OCI-LY7 (cell line): ENCODE measurements at regions of chr10 and their contacts with region 1.

Region 1: DNA sequence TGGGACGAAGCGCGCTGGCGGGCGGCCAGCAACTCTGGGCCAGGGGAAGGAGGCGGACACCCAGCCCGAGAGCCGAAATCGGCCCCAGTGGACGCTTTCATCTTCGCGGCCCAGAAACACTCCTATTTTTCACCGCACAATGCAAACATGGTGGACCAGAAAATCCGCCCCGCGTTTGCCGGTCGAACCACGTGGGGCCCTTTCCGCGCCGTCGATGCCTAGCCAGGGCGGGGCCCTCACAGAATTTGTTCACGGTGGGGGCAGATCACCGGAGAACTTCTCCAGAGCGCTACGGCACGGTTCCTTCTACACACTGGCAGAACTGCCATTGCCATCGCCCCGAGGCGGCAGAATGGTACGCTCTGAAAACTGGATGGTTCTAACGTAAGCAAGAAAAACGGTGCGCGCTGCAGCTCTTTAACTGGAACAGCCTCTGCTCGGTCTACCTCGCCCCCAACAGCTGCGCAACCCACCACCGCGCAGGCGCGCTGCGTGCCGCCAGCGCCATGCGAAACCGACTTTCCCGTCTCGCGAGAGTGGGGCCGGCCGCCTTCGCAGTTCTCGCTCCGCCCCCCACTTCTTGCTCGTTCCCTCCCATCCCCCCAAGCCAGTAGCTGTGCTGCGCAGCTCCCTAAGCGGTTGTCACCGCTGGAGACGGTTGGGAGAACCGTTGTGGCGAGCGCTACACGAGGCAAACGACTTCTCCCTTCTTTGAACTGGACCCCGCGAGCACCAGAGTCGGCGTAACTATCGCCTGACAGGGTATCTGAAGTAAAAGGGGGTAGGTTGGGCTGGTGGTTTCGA is at the start of gene HNRNPH3:
- DNase-seq: peak; percentile 99
- H3K4me3 ChIP-seq: peak within 1 kb of the TSS; percentile 85
- H3K27ac ChIP-seq: peak within 1 kb of the TSS; percentile 89
- H3K4me1 ChIP-seq: peaks cover 65% of the 10 kb centered on the region
- CTCF ChIP-seq: no peak
- total RNA-seq, gene HNRNPH3: 30.8 and 69.2 TPM in 2 replicates

Region 2: DNA sequence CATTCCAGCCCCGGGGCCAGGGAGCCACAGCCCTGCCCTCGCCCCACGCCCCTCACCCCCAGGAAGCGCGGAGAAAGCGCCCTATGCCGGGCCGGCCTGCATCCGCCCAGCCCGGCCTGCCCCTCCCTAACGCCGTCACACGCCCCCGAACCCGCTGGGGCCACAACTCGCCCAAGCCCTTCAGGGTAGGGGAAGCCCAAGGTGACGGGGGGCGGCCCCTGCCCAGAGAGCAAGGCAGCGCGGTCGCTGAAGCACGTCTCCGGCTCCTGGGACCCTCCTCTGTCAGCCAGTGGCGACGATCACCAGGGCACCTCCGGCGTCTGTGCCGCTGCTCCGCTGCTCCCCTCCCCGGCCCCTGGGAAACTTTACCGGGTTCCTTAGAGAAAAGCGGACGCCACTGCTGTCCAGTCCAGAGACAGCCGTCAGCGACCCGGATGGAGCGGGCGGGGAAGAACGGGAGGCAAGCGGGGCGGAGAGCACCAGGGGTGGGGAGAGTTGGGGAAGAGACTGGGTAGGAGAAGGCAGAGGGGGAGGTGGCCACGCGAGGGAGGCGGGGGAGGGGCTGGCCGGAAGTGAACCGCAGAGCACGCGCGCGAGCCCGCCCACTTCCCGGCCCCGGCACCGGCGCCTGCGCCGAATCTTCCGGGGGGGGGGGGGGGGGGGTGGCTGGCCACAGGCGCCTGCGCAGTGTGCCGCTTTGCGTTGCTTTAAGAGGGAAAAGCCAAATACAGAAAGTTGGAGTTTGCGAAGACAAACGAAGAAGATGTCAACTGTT is 256.7 kb before region 1 on chr10 and contains the start of gene HERC4:
- CTCF ChIA-PET with region 1: no interaction called
- POLR2A ChIA-PET with region 1: interaction called, 3 read pairs
- intact Hi-C with region 1: loop called (anchors 2 kb)
- DNase-seq: peak; percentile 91
- H3K4me3 ChIP-seq: peak within 1 kb of the TSS; percentile 85
- H3K27ac ChIP-seq: peak within 1 kb of the TSS; percentile 83
- H3K4me1 ChIP-seq: peaks cover 15% of the 10 kb centered on the region
- CTCF ChIP-seq: no peak
- total RNA-seq, gene HERC4: 34.2 and 36.1 TPM in 2 replicates

Region 3: DNA sequence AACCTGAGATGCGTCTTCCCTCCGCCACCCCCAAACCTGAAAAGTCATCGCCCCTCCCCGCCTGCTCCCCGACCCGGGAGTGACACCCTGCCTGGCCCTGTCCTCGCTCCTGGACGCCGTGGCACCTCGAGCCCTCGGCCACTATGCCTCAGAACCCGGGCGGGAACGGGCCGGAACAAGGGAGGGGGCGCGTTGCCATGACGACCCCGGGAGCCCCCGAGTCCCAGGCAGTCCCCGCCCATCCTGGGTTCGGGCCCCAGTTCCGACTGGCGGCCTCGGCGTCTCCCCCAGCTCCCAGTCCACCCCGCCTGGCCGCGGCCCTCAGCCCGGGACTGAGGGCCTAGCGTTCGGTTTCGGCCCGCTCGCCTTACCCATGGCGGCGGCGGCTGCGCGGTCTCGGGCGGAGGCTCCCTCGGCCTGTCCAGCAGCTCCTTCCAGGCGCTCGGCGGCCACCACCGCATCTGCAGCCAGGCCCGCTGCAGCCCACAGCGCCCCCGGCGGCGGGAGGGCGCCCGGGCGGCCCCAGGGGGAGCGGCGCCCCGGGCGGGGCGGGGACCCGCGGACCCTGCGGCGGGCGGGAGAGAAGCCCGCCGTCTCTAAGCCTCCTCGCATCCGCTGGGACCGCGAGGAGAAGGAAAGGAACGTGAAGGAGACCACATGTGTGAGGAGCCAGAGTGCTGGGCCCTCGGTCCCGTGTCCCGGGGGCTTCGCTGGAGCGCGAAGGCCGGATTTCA is 75.3 kb after region 1 on chr10 and contains the start of gene RUFY2:
- CTCF ChIA-PET with region 1: no interaction called
- POLR2A ChIA-PET with region 1: no interaction called
- intact Hi-C with region 1: loop called (anchors 2 kb)
- DNase-seq: peak; percentile 86
- H3K4me3 ChIP-seq: peak within 1 kb of the TSS; percentile 79
- H3K27ac ChIP-seq: peak within 1 kb of the TSS; percentile 48
- H3K4me1 ChIP-seq: peaks cover 14% of the 10 kb centered on the region
- CTCF ChIP-seq: peak; percentile 63
- total RNA-seq, gene RUFY2: 16.6 and 17.4 TPM in 2 replicates